ENCODE measurements at regions of chr3 and their contacts with region 1.

Region 1: DNA sequence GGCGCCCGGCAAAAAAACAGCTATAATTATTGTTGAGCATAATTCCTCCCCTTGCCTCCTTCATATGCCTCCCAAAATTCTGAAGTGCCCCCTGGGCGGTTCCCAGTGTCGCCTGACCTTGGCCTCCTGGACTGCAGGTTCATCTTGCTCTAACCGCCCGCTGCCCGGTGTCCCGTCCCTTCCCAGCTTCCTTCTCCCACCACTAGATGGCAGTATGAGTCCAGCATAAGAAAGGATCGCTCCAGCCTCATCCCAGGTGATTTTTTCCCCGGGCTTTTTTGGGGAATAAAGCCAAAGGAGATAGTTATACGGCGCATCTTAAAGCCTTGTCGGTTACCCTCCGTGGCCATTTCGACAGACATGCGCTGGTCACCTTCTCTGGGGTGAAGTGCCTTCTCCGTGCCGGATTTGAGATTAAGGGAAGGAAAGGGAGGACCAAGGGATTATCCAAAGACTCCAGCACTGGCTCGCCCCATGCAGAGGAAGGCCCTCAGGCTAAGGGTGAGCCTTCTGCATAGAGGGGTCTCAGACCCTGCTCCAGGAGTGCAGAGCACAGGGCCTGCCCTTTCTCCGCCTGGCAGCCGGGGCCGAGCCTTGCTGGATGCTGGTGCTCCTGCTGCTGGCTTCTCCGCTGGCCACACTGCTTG is 45.8 kb upstream of the TRA2B start:
- DNase-seq: peak; percentile 7 to 62 (median 42)
- ATAC-seq: peak; percentile 83
- H3K4me3 ChIP-seq: no peak overlapping the region
- H3K4me3 Mint-ChIP-seq: no peak overlapping the region
- H3K27ac ChIP-seq: no peak overlapping the region
- H3K27ac Mint-ChIP-seq: no peak overlapping the region
- H3K4me1 ChIP-seq: no peaks in the 10 kb centered on the region
- H3K4me1 Mint-ChIP-seq: peaks cover 0 to 6% (median 5%) of the 10 kb centered on the region in 7 donors
- H3K27me3 ChIP-seq: no peaks in the 10 kb centered on the region
- H3K27me3 Mint-ChIP-seq: peaks cover 0 to 20% (median 7%) of the 10 kb centered on the region in 5 donors

Region 2: GRCh38 chr3:185353823-185354614 is 629.6 kb before region 1 on chr3:
- CTCF ChIA-PET with region 1: no interaction called
- POLR2A ChIA-PET with region 1: no interaction called
- intact Hi-C with region 1: no loop called
- DNase-seq: peak; percentile 21 to 66 (median 50)
- ATAC-seq: peak; percentile 97
- H3K4me3 ChIP-seq: no peak overlapping the region
- H3K4me3 Mint-ChIP-seq: no peak overlapping the region
- H3K27ac ChIP-seq: no peak overlapping the region
- H3K27ac Mint-ChIP-seq: no peak overlapping the region
- H3K4me1 ChIP-seq: no peaks in the 10 kb centered on the region
- H3K4me1 Mint-ChIP-seq: no peaks in the 10 kb centered on the region
- H3K27me3 ChIP-seq: no peaks in the 10 kb centered on the region
- H3K27me3 Mint-ChIP-seq: peaks cover 17 to 36% (median 23%) of the 10 kb centered on the region in 5 donors

Region 3: DNA sequence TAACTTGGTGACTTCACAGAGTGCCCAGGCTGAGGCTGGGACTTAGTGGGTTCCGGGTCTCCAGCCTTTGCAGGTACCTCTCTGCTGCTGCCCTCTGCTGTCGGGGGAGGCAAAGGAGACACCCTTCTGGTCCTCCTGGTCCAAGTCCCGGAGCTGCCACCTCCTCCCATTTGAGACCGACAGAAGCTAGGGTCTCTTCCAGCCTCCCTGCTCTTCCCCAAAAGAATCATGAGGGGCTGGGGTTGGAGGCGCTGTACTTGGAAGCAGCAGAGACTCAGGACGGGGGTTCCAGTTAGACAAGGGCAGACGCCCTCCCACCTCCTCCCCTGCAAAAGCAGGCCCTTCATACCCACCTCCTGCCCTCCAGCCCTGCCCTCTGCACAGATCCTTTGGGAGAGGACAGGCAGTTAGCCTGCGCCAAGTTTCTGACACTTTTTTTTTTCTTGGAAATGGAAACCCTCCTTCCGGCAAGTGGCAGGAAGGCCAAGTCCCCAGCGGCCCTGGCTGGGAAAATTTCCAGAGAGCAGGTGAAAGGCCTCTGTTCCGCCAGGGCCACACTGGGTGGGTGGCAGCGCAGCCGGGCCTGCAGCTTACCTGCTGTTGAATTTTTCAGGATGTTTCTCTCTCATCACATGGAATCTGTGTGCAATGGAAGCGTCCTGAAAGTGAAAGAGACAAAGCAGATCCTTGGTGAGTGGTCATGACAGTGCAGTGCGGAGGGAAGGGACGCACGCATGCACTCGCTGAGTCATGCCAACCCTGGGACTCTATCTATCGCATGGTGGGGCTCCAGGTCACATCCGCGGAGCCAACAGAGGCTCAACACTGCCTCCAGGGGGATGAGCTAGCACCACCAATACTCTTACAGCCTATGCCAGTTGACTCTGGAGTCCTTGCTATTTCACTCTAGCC is 258.5 kb after region 1 on chr3:
- CTCF ChIA-PET with region 1: interaction called, 3 read pairs
- POLR2A ChIA-PET with region 1: no interaction called
- intact Hi-C with region 1: loop called (anchors 1 kb)
- DNase-seq: peak in 3 of 9 donors; percentile 23 to 46 (median 31)
- ATAC-seq: peak; percentile 92
- H3K4me3 ChIP-seq: no peak overlapping the region
- H3K4me3 Mint-ChIP-seq: peak overlapping the region in 6 of 10 donors; percentile 12 to 63 (median 19)
- H3K27ac ChIP-seq: no peak overlapping the region
- H3K27ac Mint-ChIP-seq: no peak overlapping the region
- H3K4me1 ChIP-seq: no peaks in the 10 kb centered on the region
- H3K4me1 Mint-ChIP-seq: peaks cover 0 to 12% (median 0%) of the 10 kb centered on the region in 7 donors
- H3K27me3 ChIP-seq: no peaks in the 10 kb centered on the region
- H3K27me3 Mint-ChIP-seq: peaks cover 0 to 10% (median 4%) of the 10 kb centered on the region in 5 donors

Region 4: DNA sequence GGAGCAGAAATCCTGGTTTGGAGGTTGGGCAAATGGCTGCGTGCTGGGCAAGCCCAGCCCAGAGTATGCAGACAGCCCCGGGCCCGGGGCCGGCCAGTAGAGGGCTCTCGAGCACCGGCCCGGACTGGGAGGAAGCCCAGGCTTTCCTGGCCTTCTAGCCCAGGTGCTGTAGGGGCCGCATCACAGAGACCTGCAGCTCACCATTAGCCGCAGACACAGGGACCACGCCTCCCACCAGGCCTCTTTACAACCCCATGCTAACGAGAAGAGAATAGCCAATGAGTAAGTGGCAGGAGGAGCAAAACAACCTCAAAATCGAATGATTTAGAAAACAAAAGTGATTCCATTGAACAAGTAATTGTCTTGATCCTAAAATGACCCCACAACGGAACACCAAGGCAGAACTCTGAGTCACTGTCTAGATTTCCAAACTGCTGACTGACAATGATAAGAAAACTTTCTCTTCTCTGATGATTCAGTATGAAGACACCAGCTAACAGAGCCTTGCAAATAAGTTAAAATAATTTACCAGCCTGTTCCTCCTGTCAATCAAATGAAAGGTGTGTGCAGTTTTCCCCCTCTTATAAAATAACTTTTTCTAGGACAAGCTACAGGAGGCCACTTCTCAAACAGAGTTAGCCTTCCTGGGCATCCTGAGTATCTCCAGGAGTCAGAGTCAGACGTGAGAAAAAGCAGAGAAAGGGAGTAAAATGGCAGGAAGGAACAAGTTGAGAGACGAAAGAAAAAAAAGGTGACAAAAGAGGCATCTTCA is 276.2 kb after region 1 on chr3:
- CTCF ChIA-PET with region 1: interaction called, 3 read pairs
- POLR2A ChIA-PET with region 1: no interaction called
- intact Hi-C with region 1: loop called (anchors 1 to 5 kb)
- DNase-seq: peak; percentile 17 to 65 (median 43)
- ATAC-seq: peak; percentile 92
- H3K4me3 ChIP-seq: no peak overlapping the region
- H3K4me3 Mint-ChIP-seq: peak overlapping the region in 3 of 10 donors; percentile 23 to 41 (median 35)
- H3K27ac ChIP-seq: no peak overlapping the region
- H3K27ac Mint-ChIP-seq: peak overlapping the region in 8 of 9 donors; percentile 12 to 73 (median 32)
- H3K4me1 ChIP-seq: peaks cover 0 to 3% of the 10 kb centered on the region in 2 donors
- H3K4me1 Mint-ChIP-seq: peaks cover 13 to 23% (median 20%) of the 10 kb centered on the region in 7 donors
- H3K27me3 ChIP-seq: no peaks in the 10 kb centered on the region
- H3K27me3 Mint-ChIP-seq: no peaks in the 10 kb centered on the region

Region 5: GRCh38 chr3:186821429-186822367 is 838.1 kb after region 1 on chr3:
- CTCF ChIA-PET with region 1: no interaction called
- POLR2A ChIA-PET with region 1: no interaction called
- intact Hi-C with region 1: loop called (anchors 1 to 10 kb)
- DNase-seq: peak in 5 of 9 donors; percentile 37 to 49 (median 45)
- ATAC-seq: peak; percentile 46
- H3K4me3 ChIP-seq: no peak overlapping the region
- H3K4me3 Mint-ChIP-seq: no peak overlapping the region
- H3K27ac ChIP-seq: no peak overlapping the region
- H3K27ac Mint-ChIP-seq: no peak overlapping the region
- H3K4me1 ChIP-seq: peaks cover 6 to 11% of the 10 kb centered on the region in 2 donors
- H3K4me1 Mint-ChIP-seq: peaks cover 9 to 20% (median 12%) of the 10 kb centered on the region in 7 donors
- H3K27me3 ChIP-seq: peaks cover 0 to 14% of the 10 kb centered on the region in 2 donors
- H3K27me3 Mint-ChIP-seq: peaks cover 13 to 23% (median 18%) of the 10 kb centered on the region in 5 donors

Region 6: DNA sequence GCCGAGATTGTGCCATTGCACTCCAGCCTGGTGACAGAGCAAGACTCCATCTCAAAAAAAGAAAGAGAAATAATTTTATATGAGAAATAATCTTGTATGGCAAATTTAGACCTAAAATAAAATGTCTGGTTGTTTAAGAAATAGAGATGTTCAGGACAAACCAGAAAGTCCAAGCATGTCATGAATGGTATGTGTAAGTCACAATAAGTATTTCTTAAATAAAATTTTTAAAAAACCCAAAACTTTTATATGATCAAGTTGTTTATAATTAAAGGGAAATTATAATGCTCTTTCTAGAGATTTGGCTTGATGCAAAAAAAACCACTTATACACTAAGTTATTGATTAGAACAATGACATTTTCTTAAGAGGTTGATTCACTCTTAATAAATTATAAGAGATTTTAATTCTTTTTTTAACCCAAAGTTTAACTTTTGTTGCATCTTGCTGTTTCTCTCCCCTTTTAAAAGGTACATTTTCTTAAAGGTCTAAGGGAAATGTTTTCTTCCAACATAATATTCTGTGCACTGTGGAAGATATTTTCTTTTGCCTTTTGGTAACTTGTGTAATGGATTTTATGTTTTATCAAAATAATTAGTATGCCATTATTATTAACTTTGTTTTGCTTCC is 1490.3 kb after region 1 on chr3:
- CTCF ChIA-PET with region 1: no interaction called
- POLR2A ChIA-PET with region 1: no interaction called
- intact Hi-C with region 1: no loop called
- DNase-seq: no peak
- ATAC-seq: no peak
- H3K4me3 ChIP-seq: no peak overlapping the region
- H3K4me3 Mint-ChIP-seq: no peak overlapping the region
- H3K27ac ChIP-seq: no peak overlapping the region
- H3K27ac Mint-ChIP-seq: no peak overlapping the region
- H3K4me1 ChIP-seq: no peaks in the 10 kb centered on the region
- H3K4me1 Mint-ChIP-seq: no peaks in the 10 kb centered on the region
- H3K27me3 ChIP-seq: no peaks in the 10 kb centered on the region
- H3K27me3 Mint-ChIP-seq: peaks cover 5 to 26% (median 22%) of the 10 kb centered on the region in 5 donors